PC-9 (cell line): ENCODE measurements at regions of chr5 and their contacts with region 1.

Region 1: GRCh38 chr5:94544031-94544650 is 74.3 kb downstream of the KIAA0825 start:
- DNase-seq: no peak
- H3K4me3 ChIP-seq: no peak overlapping the region
- H3K27ac ChIP-seq: no peak overlapping the region
- H3K4me1 ChIP-seq: no peaks in the 10 kb centered on the region
- H3K27me3 ChIP-seq: no peaks in the 10 kb centered on the region
- CTCF ChIP-seq: no peak

Region 2: DNA sequence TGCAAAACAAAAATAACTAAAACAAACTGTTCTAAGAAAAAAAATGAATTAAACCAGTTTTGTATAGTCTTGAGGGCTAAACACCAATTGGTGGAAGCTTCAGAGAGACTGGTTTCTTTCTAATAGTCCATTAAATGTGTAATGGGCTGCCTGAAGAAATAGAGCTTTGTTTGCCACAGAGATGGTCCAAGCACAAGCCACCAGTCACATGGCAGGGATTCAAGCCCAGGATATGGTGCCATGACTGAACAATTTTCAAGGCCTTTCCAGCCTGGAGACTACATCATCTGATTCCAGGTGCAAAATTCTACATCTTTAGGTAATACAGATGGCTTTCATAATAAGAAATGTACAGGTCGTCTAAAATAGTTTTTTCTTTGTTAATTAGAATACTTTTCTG is 1318.4 kb before region 1 on chr5:
- CTCF ChIA-PET with region 1: no interaction called
- POLR2A ChIA-PET with region 1: interaction called, 11 read pairs
- intact Hi-C with region 1: no loop called
- DNase-seq: no peak
- H3K4me3 ChIP-seq: no peak overlapping the region
- H3K27ac ChIP-seq: no peak overlapping the region
- H3K4me1 ChIP-seq: no peaks in the 10 kb centered on the region
- H3K27me3 ChIP-seq: no peaks in the 10 kb centered on the region
- CTCF ChIP-seq: no peak

Region 3: DNA sequence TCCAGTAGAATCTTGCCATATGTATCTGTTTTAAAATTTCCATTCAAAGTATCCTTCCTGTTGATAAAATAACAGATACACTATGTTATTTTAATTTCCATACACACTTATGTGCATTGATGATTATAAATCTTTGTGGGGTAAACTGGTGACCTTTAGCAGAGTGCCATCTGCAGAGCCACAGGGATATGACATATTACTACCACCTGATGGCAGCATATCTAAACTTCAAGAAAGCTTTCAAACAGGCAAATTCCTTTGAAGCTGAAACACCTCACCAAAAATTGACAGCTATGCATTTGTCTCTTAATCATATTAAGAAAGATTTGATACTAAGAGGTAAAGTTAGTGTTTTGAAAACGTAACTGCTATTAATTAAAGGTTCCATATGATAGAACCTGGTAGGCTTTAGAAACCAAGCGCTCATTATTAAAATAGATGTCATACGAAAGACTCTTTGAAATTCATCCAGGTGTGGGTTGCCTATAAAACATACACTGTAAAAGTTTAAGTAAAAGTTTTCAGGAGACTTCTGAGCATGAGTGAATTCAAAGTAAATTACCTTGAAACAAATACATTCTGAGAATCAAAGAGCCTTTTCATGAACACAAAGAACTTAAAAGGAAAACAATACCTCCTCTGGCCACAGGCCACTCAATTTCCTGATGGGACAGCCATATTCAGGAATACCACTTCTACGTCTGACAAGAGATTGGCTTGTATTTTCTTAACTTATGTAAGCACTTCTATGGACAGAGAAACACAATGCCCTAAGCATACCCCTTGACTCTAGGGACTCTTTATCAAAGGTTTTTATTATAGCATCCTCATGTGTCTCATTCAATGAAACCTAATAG is 19.1 kb before region 1 on chr5:
- CTCF ChIA-PET with region 1: no interaction called
- POLR2A ChIA-PET with region 1: no interaction called
- intact Hi-C with region 1: no loop called
- DNase-seq: no peak
- H3K4me3 ChIP-seq: no peak overlapping the region
- H3K27ac ChIP-seq: no peak overlapping the region
- H3K4me1 ChIP-seq: no peaks in the 10 kb centered on the region
- H3K27me3 ChIP-seq: no peaks in the 10 kb centered on the region
- CTCF ChIP-seq: peak; percentile 69